ENCODE measurements at regions of chr5 and their contacts with region 1.

Region 1: GRCh38 chr5:128498844-128499455 is 39.1 kb downstream of the FBN2 start:
- DNase-seq: no peak

Region 2: GRCh38 chr5:128213340-128213739 is 285.6 kb before region 1 on chr5:
- intact Hi-C with region 1: loop called (anchors 5 kb)
- DNase-seq: peak in 5 of 10 donors; percentile 37 to 77 (median 64)

Region 3: DNA sequence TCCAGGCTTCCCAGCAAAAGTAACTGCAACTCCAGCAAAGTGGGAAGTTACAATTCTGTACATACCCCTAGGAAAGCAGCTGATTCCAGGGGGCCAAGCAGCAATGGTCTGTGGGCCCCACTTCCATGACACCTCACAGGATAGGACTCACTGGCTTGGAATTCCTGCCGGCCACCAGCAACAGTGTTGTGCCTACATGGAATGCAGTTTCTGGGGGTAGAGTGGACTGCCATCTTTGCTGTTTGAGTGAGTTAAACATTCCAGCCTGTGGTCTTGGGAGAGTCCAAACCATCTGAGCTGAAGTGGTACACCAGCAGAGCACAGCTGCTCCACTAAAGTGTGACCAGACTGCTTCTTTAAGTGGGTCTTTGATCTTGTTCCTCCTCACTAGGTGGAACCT is 52.5 kb after region 1 on chr5:
- intact Hi-C with region 1: no loop called
- DNase-seq: no peak